ENCODE measurements at regions of chr11 and their contacts with region 1.

Region 1: GRCh38 chr11:76919887-76920746 is 59.4 kb downstream of the ACER3 start:
- DNase-seq: peak; percentile 60
- ATAC-seq: peak; percentile 87
- H3K4me3 ChIP-seq: no peak overlapping the region; a peak in 1 of 4 replicates
- H3K27ac ChIP-seq: no peak overlapping the region
- H3K4me1 ChIP-seq: peaks cover 7 to 17% of the 10 kb centered on the region in 2 experiments; a peak in 3 of 4 replicates
- H3K27me3 ChIP-seq: no peaks in the 10 kb centered on the region
- CTCF ChIP-seq: peak; percentile 86 to 98 (median 90)
- POLR2A ChIP-seq: no peak
- RAD21 ChIP-seq: peak; percentile 87

Region 2: GRCh38 chr11:76721755-76722677 is 198.1 kb before region 1 on chr11:
- CTCF ChIA-PET with region 1: interaction called, 13 read pairs
- POLR2A ChIA-PET with region 1: no interaction called
- RAD21 ChIA-PET with region 1: interaction called, 3 to 4 read pairs
- intact Hi-C with region 1: no loop called
- DNase-seq: peak; percentile 68
- ATAC-seq: peak; percentile 98
- H3K4me3 ChIP-seq: peak overlapping the region; percentile 13 to 27
- H3K27ac ChIP-seq: no peak overlapping the region
- H3K4me1 ChIP-seq: peaks cover 0 to 10% of the 10 kb centered on the region in 2 experiments; a peak in 2 of 4 replicates
- H3K27me3 ChIP-seq: peaks cover 41% of the 10 kb centered on the region
- CTCF ChIP-seq: peak; percentile 77 to 95 (median 88)
- POLR2A ChIP-seq: no peak
- RAD21 ChIP-seq: peak; percentile 72

Region 3: DNA sequence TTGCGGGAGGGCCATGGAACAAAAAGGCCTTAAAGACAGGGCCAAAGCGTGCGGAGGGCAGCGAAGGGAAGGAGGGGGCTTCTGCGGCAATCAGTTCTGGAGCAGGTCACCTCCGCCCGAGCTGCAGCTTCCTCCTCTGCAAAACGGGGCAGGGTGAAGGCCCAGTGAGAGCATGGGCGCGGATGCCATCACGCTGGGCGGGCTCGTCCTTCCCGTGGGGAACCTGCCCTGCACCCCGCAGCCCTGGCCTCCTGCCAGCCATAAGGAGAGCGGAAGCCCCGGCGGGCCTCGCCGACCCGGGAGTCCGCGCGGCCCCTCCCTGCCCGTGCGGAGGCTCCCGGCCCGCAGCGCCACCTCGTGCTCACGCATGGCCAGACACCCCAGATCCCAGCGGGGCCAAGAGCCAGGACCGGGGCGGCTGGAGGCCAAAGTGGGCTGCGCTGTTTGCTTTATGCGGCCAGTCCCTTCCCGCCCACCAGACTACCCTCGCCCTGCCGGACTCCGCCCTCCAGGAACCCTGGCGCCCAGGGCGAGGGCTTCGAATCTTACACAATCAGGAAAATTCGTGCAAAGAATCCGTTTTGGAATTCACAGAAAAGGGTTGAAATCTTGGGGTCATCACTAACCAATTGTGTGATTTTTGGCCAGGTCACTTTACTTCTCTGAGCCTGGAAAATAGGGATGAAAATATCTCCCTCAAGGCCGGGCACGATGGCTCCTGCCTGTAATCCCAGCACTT is 120.9 kb before region 1 on chr11:
- CTCF ChIA-PET with region 1: interaction called, 50 read pairs
- POLR2A ChIA-PET with region 1: interaction called, 3 read pairs
- RAD21 ChIA-PET with region 1: interaction called in 1 of 2 experiments, 3 read pairs
- intact Hi-C with region 1: no loop called
- DNase-seq: no peak
- ATAC-seq: peak; percentile 97
- H3K4me3 ChIP-seq: no peak overlapping the region
- H3K27ac ChIP-seq: no peak overlapping the region; the same call in 1 of the 2 replicates
- H3K4me1 ChIP-seq: peaks cover 7 to 10% of the 10 kb centered on the region in 2 experiments; a peak in 3 of 4 replicates
- H3K27me3 ChIP-seq: no peaks in the 10 kb centered on the region
- CTCF ChIP-seq: peak; percentile 80 to 90 (median 89)
- POLR2A ChIP-seq: no peak
- RAD21 ChIP-seq: peak; percentile 94

Region 4: DNA sequence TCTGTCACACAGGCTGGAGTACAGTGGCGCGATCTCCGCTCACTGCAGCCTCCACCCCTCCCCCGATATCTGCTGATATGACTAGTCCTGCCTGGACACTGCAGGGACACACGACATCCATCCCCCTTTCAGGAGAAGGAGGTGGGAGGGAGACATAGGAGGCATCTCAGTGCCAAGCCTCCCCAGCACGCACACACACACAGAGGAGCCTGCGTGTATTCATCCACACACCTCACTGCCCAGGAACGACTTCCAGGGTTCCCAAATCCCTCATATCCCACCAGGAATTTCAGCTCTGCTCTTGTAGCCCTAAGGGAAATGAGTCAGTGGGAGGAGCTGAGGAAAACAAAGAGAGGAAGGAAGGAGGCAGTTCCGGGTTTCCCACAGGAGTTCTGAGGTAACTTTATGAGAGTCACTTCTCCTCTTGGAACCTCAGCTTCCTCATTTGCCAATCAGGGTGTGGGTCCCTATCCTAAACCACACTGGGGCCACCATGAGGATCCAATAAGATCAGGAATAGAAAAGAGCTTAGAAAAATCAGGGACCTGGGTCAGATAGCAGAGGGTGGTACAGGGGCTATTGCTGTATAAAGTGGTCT is 96.5 kb before region 1 on chr11:
- CTCF ChIA-PET with region 1: interaction called, 19 read pairs
- POLR2A ChIA-PET with region 1: interaction called, 3 read pairs
- RAD21 ChIA-PET with region 1: no interaction called
- intact Hi-C with region 1: no loop called
- DNase-seq: peak; percentile 88
- ATAC-seq: peak; percentile 95
- H3K4me3 ChIP-seq: peak overlapping the region; percentile 42 to 59
- H3K27ac ChIP-seq: peak overlapping the region; percentile 55
- H3K4me1 ChIP-seq: peaks cover 18 to 34% of the 10 kb centered on the region in 2 experiments; a peak in 3 of 4 replicates
- H3K27me3 ChIP-seq: no peaks in the 10 kb centered on the region
- CTCF ChIP-seq: no peak
- POLR2A ChIP-seq: peak; percentile 70
- RAD21 ChIP-seq: no peak

Region 5: GRCh38 chr11:77091146-77091940 is 171.2 kb after region 1 on chr11:
- CTCF ChIA-PET with region 1: interaction called, 20 read pairs
- POLR2A ChIA-PET with region 1: no interaction called
- RAD21 ChIA-PET with region 1: no interaction called
- intact Hi-C with region 1: loop called (anchors 1 kb)
- DNase-seq: peak; percentile 68
- ATAC-seq: peak; percentile 96
- H3K4me3 ChIP-seq: no peak overlapping the region
- H3K27ac ChIP-seq: no peak overlapping the region
- H3K4me1 ChIP-seq: peaks cover 2 to 11% of the 10 kb centered on the region in 2 experiments; a peak in 1 of 4 replicates
- H3K27me3 ChIP-seq: no peaks in the 10 kb centered on the region
- CTCF ChIP-seq: peak; percentile 95 to 99 (median 97)
- POLR2A ChIP-seq: no peak
- RAD21 ChIP-seq: peak; percentile 96

Measured in HCT116 (cell line).